ENCODE measurements at regions of chr7 and their contacts with region 1.

Region 1: GRCh38 chr7:116271963-116272839 is 61.9 kb downstream of the TES start:
- DNase-seq: no peak
- H3K4me3 ChIP-seq: peak overlapping the region in 3 of 4 donors; percentile 19 to 39 (median 26)
- H3K27ac ChIP-seq: peak overlapping the region; percentile 79 to 84 (median 81)
- H3K4me1 ChIP-seq: peaks cover 31 to 61% (median 52%) of the 10 kb centered on the region in 4 donors
- H3K27me3 ChIP-seq: no peaks in the 10 kb centered on the region
- CTCF ChIP-seq: no peak
- EP300 ChIP-seq: peak; percentile 80
- POLR2A ChIP-seq: no peak

Region 2: DNA sequence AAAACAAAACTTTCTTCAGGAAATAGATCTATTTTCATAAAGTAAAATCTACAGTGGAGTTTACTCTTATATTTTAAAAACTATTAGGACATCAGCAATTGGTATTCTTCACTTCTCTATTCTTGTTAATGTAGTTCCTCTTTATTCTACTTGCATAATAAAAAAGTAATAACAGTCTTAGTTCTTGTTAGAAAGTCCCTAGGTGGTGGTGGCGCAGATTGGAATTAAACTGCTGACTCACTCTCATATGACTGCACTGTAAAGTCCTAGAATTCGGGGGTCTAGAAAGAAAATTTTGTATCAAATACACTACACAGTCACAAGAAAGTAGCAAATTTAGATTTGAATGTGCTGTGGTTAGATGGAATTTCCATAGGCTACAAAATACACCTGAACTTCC is 106.5 kb before region 1 on chr7:
- intact Hi-C with region 1: no loop called
- DNase-seq: no peak
- H3K4me3 ChIP-seq: no peak overlapping the region
- H3K27ac ChIP-seq: no peak overlapping the region
- H3K4me1 ChIP-seq: peaks cover 0 to 7% (median 2%) of the 10 kb centered on the region in 4 donors
- H3K27me3 ChIP-seq: no peaks in the 10 kb centered on the region
- CTCF ChIP-seq: no peak
- EP300 ChIP-seq: no peak
- POLR2A ChIP-seq: no peak

Region 3: DNA sequence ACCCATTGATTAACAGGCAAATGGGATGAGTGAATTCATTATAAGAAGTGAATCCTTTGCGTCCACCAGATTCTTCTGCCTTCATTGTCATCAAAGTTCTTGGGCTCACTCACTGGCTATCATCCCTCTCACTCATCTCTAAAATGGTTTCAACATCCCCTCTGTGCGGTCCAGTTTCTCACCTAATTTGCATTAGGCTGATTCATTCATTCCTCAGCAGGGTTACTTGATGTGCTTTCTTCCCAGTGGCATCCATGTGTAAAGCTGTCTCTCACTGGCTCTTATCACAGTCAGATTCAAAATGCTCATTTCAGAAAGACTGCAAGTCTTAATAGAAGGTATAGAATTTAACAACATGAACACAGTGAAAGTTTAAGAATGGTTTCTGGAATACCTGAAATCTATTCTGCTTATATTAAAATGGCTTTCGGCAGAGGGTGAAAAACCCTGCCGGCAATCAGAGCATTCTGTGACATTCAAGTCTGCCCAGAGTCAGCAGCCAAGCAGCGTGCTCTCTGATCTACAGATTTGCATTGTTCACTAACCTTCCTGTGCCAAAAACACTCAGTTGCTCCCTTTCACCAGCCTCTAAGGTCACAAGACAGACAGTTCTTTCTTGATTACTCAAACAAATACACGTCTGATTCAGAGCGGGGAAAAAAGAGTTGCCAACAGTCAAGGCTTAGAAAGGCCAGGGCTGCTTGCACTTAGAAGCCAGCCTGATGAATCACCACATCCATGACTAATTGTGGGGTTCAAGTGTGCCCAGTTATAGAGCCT is 44.8 kb after region 1 on chr7:
- intact Hi-C with region 1: loop called (anchors 5 kb)
- DNase-seq: no peak
- H3K4me3 ChIP-seq: peak overlapping the region in 2 of 4 donors; percentile 22 to 27
- H3K27ac ChIP-seq: peak overlapping the region; percentile 74 to 80 (median 78)
- H3K4me1 ChIP-seq: peaks cover 22 to 34% (median 32%) of the 10 kb centered on the region in 4 donors
- H3K27me3 ChIP-seq: no peaks in the 10 kb centered on the region
- CTCF ChIP-seq: no peak
- EP300 ChIP-seq: peak; percentile 18
- POLR2A ChIP-seq: no peak

Region 4: DNA sequence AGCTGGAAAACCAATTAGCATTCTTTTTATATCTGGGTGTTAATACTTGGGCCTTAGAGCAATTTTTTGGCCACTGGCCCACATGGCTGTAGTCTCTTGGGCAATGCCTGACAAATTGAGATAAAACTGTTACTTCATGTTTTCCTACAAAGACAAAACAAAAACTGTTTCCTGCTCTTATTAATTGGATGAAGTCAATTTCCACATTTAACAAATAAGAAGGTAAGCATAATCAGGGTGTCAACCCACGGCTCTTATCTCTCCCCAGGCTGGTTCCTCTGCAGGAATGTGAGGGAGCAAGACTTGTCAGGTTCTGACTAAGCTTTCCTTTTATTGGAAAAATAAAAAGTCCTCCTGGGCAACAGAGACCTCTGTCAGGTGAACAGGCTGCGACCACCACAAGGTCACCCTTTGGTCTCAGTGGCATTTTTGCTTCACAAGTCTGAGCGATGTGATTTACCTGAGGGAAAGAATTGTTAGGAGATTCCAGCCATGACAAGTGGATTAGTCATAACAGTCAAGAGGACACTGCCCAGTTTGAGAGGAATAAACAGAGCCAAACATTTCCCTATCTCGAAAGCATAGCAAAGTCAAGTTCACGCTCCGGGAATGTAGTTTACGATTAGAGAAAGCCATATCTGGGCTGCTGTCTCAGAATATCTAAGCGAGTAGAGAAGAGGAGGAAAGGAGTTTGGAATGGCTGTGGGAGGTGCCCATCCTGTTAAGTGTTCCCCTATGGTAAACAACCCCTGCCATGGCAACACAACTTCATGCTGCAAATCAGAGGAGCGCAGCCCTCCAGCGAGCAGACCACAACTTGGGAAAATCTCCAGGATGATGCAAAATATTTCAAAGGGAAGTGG is 82.6 kb after region 1 on chr7:
- intact Hi-C with region 1: loop called (anchors 10 kb)
- DNase-seq: no peak
- H3K4me3 ChIP-seq: peak overlapping the region; percentile 6 to 44 (median 28)
- H3K27ac ChIP-seq: peak overlapping the region; percentile 77 to 87 (median 84)
- H3K4me1 ChIP-seq: peaks cover 54 to 61% (median 56%) of the 10 kb centered on the region in 4 donors
- H3K27me3 ChIP-seq: no peaks in the 10 kb centered on the region
- CTCF ChIP-seq: no peak
- EP300 ChIP-seq: no peak
- POLR2A ChIP-seq: no peak

Region 5: DNA sequence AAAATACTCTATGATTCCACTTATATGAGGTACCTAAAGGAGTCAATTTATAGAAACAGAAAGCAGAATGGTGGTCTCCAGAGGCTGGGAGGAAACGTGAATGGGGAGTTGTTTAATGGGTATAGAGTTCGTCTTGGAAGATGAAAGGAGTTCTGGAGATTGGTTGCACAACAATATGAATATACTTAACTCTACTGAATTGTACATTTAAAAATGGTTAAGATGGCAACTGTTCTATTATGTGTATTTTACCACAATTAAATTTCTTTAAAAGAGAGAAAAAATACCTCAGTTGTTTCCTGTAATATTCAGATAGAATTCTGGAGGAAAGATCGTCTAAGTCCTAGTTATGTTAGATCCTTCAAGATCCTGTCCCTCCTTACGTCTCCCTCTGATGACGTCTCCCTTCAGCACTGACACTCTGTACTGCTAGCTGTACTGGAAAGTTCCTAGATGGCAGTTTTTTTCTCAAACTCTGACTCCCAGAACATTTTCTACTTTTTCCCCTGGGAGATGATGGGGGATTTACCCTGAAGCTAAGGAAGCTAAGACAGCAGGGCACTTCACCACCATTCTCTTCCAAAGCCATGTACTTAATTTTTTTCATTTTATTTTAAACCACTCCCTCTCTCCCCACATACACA is 174.1 kb after region 1 on chr7:
- intact Hi-C with region 1: loop called (anchors 5 kb)
- DNase-seq: no peak
- H3K4me3 ChIP-seq: no peak overlapping the region
- H3K27ac ChIP-seq: peak overlapping the region; percentile 0 to 75 (median 57)
- H3K4me1 ChIP-seq: peaks cover 18 to 69% (median 50%) of the 10 kb centered on the region in 4 donors
- H3K27me3 ChIP-seq: no peaks in the 10 kb centered on the region
- CTCF ChIP-seq: no peak
- EP300 ChIP-seq: no peak
- POLR2A ChIP-seq: no peak

Measured in esophagus muscularis mucosa (tissue), 4 donors.